ENCODE measurements at regions of chr17 and their contacts with region 1.

Region 1: GRCh38 chr17:6843241-6843880 is 11.8 kb upstream of the TEKT1 start:
- DNase-seq: peak; percentile 47
- CTCF ChIP-seq: peak; percentile 47

Region 2: GRCh38 chr17:6666077-6666521 is 177.3 kb before region 1 on chr17:
- CTCF ChIA-PET with region 1: interaction called, 15 read pairs
- POLR2A ChIA-PET with region 1: no interaction called
- DNase-seq: peak; percentile 79
- CTCF ChIP-seq: peak; percentile 97

Region 3: DNA sequence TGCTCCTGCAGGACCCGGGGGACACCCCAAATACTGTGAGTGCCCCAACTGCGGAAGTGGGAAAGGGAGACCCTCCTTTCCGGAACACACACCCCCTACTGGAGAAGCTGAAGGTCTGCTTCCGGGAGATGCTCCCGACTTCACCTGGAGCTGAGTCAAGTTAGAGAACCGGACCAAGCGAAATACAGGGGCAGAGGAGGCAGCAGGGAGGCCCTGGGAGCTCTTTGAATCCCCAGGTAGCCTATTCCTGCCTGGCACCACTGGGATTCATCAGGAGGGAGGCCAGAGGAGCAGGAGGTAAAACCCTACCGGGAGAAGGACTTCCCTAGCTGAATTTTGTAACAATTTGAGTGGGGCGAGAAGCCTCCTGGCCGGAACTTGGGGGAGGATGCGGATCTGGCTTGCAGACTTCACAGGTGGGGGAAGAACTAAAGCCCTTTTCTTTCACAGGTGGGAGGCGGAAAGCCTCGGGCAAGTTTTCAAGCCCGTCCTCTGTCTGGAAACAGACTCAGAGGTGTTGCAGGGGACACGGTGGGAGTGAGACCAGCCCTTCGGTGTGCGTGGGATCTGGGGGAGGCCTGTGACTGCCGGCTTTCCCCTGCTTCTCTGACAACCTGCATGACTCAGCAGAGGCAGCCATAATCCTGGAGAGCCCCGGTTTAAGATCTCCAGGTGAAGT is 10.5 kb after region 1 on chr17:
- CTCF ChIA-PET with region 1: interaction called, 73 read pairs
- POLR2A ChIA-PET with region 1: no interaction called
- DNase-seq: peak; percentile 54
- CTCF ChIP-seq: peak; percentile 31

Region 4: GRCh38 chr17:6913608-6914443 is 70.5 kb after region 1 on chr17:
- CTCF ChIA-PET with region 1: interaction called, 12 read pairs
- POLR2A ChIA-PET with region 1: no interaction called
- DNase-seq: peak; percentile 69
- CTCF ChIP-seq: peak; percentile 84

Region 5: GRCh38 chr17:7021993-7022778 is 178.8 kb after region 1 on chr17:
- CTCF ChIA-PET with region 1: interaction called, 30 read pairs
- POLR2A ChIA-PET with region 1: no interaction called
- DNase-seq: peak; percentile 86
- CTCF ChIP-seq: peak; percentile 91

Measured in GM10248 (cell line).